Left colon (tissue), 2 donors: ENCODE measurements at regions of chr9 and their contacts with region 1.

Region 1: GRCh38 chr9:15606643-15607472 is 54.0 kb downstream of the CCDC171 start:
- DNase-seq: no peak
- ATAC-seq: peak; percentile 34

Region 2: GRCh38 chr9:14693206-14693861 is 913.5 kb before region 1 on chr9 and contains the start of gene ZDHHC21:
- intact Hi-C with region 1: no loop called
- DNase-seq: peak; percentile 61 to 82
- ATAC-seq: peak; percentile 98
- total RNA-seq, gene ZDHHC21: 16.2 to 19.4 TPM

Region 3: DNA sequence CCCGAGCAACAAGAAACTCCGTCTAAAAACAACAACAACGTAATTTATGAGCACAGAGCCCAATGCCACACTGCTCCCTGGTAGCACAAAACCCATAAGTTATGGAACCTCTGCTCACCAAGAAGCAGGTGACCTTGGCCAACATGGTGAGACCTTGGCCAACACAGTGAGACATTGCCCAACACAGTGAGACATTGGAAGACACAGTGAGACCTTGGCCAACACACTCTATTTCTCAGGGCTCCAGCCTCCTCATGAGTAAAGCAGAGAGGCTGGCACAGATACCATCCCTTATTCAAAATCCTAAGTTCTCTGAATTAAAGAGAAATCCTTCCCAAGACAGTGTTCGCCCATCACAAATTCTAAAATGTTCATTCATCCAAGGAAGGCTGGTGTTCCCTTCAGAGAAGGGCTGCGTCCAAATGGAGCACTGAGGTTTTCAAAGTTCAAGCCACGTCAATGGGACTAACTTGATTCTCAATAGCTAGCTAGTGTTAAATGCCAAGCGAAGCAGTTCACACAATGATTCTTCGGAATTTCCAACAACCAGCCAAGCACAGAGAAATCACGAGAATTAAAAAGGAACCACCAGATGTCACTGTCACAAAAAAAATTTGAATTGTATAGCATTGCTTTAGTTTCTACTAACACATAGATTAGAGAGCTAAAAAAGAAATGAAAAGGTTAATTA is 329.3 kb before region 1 on chr9:
- intact Hi-C with region 1: loop called in 1 of 2 experiments (anchors 5 kb)
- DNase-seq: no peak
- ATAC-seq: peak; percentile 17

Region 4: DNA sequence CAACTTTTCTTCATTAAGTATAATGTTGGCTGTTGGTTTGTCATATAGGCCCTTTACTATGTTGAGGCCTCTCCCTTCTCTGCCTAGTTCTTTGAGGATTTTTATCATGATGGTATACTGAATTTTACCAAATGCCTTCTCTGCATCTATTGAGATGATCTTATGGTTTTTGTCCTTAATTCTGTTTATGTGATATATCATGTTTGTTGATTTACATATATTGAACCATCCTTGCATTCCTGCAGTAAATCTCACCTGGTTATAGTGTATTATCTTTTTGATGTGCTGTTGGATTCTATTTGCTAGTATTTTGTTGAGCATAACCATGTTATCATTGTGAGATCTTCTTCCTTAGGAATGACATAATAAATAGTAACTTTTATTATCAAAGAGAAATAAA is 308.9 kb after region 1 on chr9:
- intact Hi-C with region 1: no loop called
- DNase-seq: no peak
- ATAC-seq: no peak